Dorsolateral prefrontal cortex (tissue), 120 donors: ENCODE measurements at regions of chr7 and their contacts with region 1.

Region 1: GRCh38 chr7:105139381-105139780 is 125.4 kb downstream of the KMT2E start:
- DNase-seq: no peak
- H3K4me3 ChIP-seq: no peak overlapping the region
- H3K27ac ChIP-seq: peak overlapping the region in 2 of 59 donors; percentile 1 to 8
- H3K27me3 ChIP-seq: no peaks in the 10 kb centered on the region
- CTCF ChIP-seq: no peak

Region 2: GRCh38 chr7:105060437-105060836 is 78.9 kb before region 1 on chr7:
- intact Hi-C with region 1: no loop called
- DNase-seq: no peak
- H3K4me3 ChIP-seq: no peak overlapping the region
- H3K27ac ChIP-seq: peak overlapping the region in 15 of 59 donors; percentile 3 to 62 (median 17)
- H3K27me3 ChIP-seq: no peaks in the 10 kb centered on the region
- CTCF ChIP-seq: no peak

Region 3: DNA sequence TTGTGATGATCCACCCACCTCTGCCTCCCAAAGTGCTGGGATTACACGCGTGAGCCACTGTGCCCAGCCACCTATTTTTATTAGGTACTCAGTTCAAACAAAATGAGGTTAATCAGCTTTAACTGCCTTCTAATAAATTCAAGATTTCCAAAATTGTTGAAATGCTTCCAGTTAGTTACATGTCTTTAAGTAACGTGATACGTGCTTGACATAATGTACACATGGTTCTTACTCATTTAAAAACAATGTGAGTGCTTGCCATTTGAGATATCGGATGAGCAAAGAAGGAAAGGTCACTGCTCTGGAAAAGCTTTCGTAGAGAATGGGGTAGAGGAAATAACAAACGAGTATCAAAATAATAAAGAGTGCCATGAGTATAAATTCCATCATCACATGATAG is 41.8 kb before region 1 on chr7:
- intact Hi-C with region 1: loop called in 1 of 2 experiments (anchors 2 kb)
- DNase-seq: no peak
- H3K4me3 ChIP-seq: no peak overlapping the region
- H3K27ac ChIP-seq: peak overlapping the region in 5 of 59 donors; percentile 6 to 21 (median 14)
- H3K27me3 ChIP-seq: no peaks in the 10 kb centered on the region
- CTCF ChIP-seq: no peak

Region 4: GRCh38 chr7:105187302-105188169 is 48.2 kb after region 1 on chr7:
- intact Hi-C with region 1: no loop called
- DNase-seq: no peak
- H3K4me3 ChIP-seq: no peak overlapping the region
- H3K27ac ChIP-seq: peak overlapping the region in 16 of 59 donors; percentile 0 to 70 (median 22)
- H3K27me3 ChIP-seq: no peaks in the 10 kb centered on the region
- CTCF ChIP-seq: no peak

Region 5: DNA sequence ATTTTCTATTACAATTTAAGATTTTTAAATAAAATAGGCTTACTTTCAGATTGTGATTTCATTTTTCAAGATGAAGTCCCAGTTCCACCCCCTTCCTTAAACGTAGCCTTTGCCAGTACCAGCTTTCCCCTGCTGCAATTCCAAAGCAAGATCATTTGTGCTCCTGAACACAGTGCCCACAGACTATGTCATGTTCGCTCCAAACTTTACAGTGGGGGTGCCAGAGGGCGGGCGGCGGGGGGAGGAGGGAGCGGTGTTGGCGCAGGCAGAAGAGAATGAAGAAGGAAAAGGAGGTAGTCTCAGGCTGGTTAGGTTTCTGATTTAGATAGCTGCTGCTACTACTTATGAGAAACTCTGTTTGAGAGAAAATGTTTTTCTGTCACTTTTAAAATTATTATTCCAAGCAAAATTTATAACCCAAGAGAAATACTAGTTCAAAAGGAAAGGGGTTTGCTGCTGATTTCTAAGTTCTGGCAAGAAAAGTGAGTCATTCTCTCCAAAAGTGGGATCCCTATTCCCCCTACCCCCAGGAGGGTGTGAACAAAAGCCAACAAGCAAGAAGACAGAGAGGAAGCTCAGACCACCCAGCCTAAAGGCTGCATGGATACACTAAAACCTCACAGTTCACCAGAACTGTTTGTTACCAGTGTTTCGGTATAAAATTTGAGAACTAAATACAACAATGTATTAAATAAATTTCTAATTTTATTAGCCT is 139.7 kb after region 1 on chr7:
- intact Hi-C with region 1: no loop called
- DNase-seq: no peak
- H3K4me3 ChIP-seq: peak overlapping the region in 53 of 59 donors; percentile 0 to 60 (median 35)
- H3K27ac ChIP-seq: peak overlapping the region in 12 of 59 donors; percentile 4 to 73 (median 28)
- H3K27me3 ChIP-seq: no peaks in the 10 kb centered on the region
- CTCF ChIP-seq: no peak